Activated CD4-positive, alpha-beta T cell treated with anti-CD3 and anti-CD28 coated beads, Interleukin-2, amount 10 ng/mL, durations not matched to agents 24 days and 14 days (primary cell): ENCODE measurements at regions of chr12 and their contacts with region 1.

Region 1: DNA sequence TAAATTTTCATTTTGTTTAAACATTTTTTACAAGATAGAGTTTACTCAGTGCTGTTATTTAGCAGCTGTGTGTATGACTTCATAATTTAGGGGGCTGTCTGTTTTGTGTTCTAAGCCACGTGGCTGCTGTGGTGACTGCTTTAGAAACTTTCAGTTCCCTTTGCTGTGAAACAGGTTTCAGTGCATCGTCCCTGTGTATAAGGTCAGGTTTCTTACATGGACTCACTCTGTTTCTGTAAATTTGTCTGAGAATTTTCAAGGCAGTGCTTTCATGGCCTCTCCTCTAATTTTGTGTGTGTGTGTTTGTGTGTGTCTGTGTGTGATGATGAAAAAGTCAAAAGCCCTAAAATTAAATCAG is 32.4 kb downstream of the BICD1 start:
- DNase-seq: peak; percentile 79
- H3K4me3 Mint-ChIP-seq: peak overlapping the region; percentile 70
- H3K27ac Mint-ChIP-seq: peak overlapping the region; percentile 1
- H3K4me1 Mint-ChIP-seq: peaks cover 18% of the 10 kb centered on the region
- H3K27me3 Mint-ChIP-seq: peaks cover 14% of the 10 kb centered on the region

Region 2: DNA sequence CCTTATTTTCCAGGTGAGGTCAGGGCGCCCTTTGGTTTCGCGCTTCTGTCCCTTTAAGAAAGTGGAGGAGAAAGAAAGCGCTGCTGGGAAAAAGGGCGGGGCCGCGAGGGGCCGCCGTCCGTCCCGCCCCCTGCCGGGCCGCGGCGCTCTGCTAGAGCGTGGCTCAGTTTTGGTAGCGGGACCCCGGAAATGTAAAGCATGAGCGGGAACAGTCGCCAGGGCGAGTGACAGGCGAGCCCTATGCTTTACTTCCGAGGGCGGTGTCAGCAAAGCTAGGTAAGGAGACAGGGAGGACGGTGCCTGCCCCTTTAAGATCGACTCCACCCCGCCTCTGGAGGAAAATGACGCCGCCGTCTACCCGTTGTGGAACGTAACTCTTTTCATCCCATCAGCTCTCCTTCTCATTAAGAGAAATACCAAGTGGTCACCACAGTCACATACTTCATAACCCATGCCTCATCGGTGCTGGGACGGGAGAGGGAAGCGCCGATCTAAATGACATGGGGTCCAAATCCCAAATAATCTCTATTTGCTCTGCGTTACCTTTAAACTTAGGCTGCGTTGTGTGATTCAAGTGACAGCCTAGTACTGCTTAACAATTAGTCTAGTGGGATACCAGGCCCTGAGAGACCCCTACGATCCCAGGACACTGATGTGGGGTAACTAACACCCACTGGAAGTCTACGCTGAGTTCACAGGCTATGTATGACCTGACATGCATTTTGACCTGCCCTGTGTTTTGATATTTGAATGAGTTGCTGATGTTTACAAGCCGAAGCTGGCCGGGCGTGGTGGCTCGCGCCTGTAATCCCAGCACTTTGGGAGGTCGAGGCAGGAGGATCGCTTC is 479.7 kb before region 1 on chr12 and contains the start of gene ETFBKMT:
- intact Hi-C with region 1: loop called (anchors 2 kb)
- DNase-seq: peak; percentile 98
- H3K4me3 Mint-ChIP-seq: peak within 1 kb of the TSS; percentile 93
- H3K27ac Mint-ChIP-seq: peak within 1 kb of the TSS; percentile 99
- H3K4me1 Mint-ChIP-seq: peaks cover 15% of the 10 kb centered on the region
- H3K27me3 Mint-ChIP-seq: no peaks in the 10 kb centered on the region
- total RNA-seq, gene ETFBKMT: 0.52 and 0.84 TPM in 2 replicates

Region 3: DNA sequence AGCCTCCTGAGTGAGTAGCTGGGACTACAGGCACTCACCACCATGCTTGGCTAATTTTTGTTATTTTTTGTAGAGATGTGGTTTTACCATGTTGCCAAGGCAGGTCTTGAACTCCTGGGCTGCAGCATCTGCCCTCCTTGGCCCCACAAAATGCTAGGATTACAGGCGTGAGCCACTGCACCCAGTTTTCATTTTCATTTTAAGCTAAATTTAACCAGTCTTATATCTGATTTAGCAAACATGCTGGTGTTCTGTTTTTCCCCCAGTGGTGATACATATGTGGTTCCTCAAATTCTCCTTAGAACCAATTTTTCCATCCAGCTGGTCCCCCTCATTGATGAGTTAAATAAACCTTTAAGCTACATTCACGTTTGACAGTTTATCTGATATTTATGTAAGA is 76.2 kb before region 1 on chr12:
- intact Hi-C with region 1: loop called (anchors 5 kb)
- DNase-seq: no peak
- H3K4me3 Mint-ChIP-seq: no peak overlapping the region
- H3K27ac Mint-ChIP-seq: no peak overlapping the region
- H3K4me1 Mint-ChIP-seq: peaks cover 11% of the 10 kb centered on the region
- H3K27me3 Mint-ChIP-seq: no peaks in the 10 kb centered on the region

Region 4: DNA sequence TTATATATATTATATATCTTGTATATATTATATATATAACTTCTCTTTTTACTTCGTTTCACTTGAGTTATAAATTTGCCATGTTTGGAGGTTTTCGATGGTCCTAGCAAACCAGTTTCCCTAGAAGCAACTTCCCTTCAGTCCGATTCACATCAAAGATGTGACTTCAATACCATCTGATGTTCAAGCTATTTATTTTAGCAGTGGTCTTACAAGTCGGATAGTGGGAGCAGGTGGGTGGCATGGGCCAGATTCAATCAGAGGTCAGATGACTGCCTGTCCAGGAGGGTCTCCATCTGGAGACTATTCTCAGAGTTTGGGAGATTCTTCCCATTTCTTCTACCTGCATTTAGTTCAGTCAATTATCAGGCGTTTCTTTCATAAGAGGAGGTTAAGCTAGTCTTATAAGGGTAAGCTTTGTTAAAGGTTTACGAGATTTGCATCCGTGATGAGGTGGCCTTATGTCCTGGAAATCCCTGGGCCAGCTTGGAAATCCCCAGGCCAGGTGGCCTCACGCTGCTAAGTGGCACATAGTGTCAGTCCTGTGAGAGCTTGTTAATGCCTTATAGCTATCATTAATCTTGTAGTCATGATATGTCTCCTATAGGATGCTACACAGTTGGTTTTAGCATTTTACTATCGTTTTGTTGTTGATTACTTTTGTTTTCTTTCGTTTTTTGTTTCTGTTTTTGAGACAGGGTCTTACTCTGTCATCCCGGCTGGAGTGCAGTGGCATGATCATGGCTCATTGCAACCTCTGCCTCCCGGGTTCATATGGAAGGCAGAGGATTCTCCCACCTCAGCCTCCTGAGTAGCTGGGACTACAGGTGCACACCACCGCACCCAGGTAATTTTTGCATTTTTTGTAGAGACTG is 113.4 kb after region 1 on chr12:
- intact Hi-C with region 1: loop called (anchors 10 kb)
- DNase-seq: no peak
- H3K4me3 Mint-ChIP-seq: no peak overlapping the region
- H3K27ac Mint-ChIP-seq: no peak overlapping the region
- H3K4me1 Mint-ChIP-seq: no peaks in the 10 kb centered on the region
- H3K27me3 Mint-ChIP-seq: no peaks in the 10 kb centered on the region